Pancreas (tissue), 10 donors: ENCODE measurements at regions of chr6 and their contacts with region 1.

Region 1: GRCh38 chr6:150813319-150813992 is 52.0 kb upstream of the MTHFD1L start:
- DNase-seq: no peak
- ATAC-seq: peak in 2 of 4 donors; percentile 21 to 29
- H3K4me3 ChIP-seq: no peak overlapping the region
- H3K27ac ChIP-seq: no peak overlapping the region
- H3K4me1 ChIP-seq: no peaks in the 10 kb centered on the region
- H3K27me3 ChIP-seq: no peaks in the 10 kb centered on the region
- CTCF ChIP-seq: no peak

Region 2: GRCh38 chr6:150409576-150410066 is 403.8 kb before region 1 on chr6:
- intact Hi-C with region 1: loop called in 1 of 3 experiments (anchors 5 kb)
- DNase-seq: peak; percentile 61 to 84 (median 72)
- ATAC-seq: peak; percentile 47 to 82 (median 66)
- H3K4me3 ChIP-seq: no peak overlapping the region
- H3K27ac ChIP-seq: peak overlapping the region in 1 of 4 donors; percentile 1
- H3K4me1 ChIP-seq: peaks cover 7 to 20% (median 11%) of the 10 kb centered on the region in 3 donors
- H3K27me3 ChIP-seq: no peaks in the 10 kb centered on the region
- CTCF ChIP-seq: no peak

Region 3: DNA sequence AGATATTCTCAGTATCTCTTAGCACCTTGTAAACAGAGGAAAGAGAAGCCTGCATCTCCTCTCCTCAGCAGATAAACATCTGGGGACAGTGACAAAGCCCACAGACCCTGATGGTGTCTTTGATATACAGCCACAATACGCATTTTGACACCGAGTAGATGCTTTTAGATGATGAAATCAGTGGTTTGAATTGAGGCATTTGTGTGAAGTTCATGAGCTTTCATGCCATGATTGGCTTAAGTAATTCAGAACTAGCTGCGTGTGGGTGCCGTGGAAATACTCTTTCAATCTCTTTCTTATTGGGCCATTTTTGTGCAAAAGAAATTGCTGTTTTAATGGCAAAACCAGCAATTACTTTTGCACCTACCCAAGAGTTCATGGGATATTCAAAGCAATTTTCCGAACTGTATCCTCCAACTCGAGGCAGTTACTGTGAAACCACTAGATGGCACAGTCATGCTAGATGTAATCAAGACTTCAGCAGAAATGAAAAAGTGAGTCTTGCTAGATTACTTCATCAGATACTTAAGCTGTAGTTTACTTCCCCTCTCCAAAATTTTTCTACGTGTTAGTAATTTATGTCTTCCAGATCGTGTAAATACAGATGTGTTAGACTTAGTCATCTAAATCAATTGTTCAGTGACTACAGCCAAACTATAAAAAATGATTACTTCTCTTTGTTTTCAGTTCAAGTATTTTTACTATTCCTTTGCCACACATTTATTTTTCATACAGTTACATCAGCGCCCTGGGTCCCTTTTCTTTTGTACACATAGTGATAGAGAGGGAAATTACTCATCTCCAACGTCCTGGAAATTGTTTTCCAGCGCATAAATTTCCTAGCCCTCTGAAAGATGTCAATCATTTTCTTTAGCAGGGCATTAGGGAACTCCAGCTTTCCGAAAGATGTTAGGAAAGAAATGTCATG is 395.3 kb before region 1 on chr6:
- intact Hi-C with region 1: loop called (anchors 5 to 10 kb)
- DNase-seq: peak in 1 of 6 donors; percentile 29
- ATAC-seq: peak; percentile 87 to 96 (median 94)
- H3K4me3 ChIP-seq: peak overlapping the region in 2 of 4 donors; percentile 30 to 35
- H3K27ac ChIP-seq: peak overlapping the region in 2 of 4 donors; percentile 46 to 51
- H3K4me1 ChIP-seq: peaks cover 0 to 8% (median 0%) of the 10 kb centered on the region in 3 donors
- H3K27me3 ChIP-seq: no peaks in the 10 kb centered on the region
- CTCF ChIP-seq: peak in 3 of 4 donors; percentile 38 to 61 (median 61)

Region 4: GRCh38 chr6:150600301-150601017 is 213.0 kb before region 1 on chr6:
- intact Hi-C with region 1: no loop called
- DNase-seq: peak; percentile 44 to 82 (median 58)
- ATAC-seq: peak; percentile 84 to 88 (median 85)
- H3K4me3 ChIP-seq: peak overlapping the region; percentile 40 to 71 (median 54)
- H3K27ac ChIP-seq: peak overlapping the region in 2 of 4 donors; percentile 55 to 62
- H3K4me1 ChIP-seq: no peaks in the 10 kb centered on the region
- H3K27me3 ChIP-seq: peaks cover 0 to 2% (median 0%) of the 10 kb centered on the region in 4 donors
- CTCF ChIP-seq: peak in 3 of 4 donors; percentile 24 to 38 (median 25)

Region 5: DNA sequence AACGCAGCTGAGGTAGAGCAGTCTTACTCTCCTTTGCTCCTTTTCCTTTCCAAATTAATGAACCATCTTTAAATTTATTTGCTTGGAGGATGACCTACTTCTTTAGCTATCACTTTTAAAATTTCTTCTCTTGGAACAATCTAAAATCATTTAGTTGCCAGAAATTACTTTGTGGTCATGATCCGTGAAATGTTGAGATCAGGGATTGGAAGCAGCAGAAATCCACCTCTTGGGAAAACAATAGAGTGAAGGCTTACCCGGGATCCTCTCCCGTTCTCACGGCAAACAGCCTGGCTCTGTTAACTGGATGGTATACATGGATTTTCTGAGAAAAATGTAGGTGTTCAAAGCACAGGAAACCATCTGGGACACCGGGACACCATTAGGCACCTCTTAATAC is 434.0 kb after region 1 on chr6:
- intact Hi-C with region 1: no loop called
- DNase-seq: no peak
- ATAC-seq: no peak
- H3K4me3 ChIP-seq: no peak overlapping the region
- H3K27ac ChIP-seq: no peak overlapping the region
- H3K4me1 ChIP-seq: no peaks in the 10 kb centered on the region
- H3K27me3 ChIP-seq: peaks cover 0 to 4% (median 1%) of the 10 kb centered on the region in 4 donors
- CTCF ChIP-seq: no peak